ENCODE measurements at regions of chr4 and their contacts with region 1.

Region 1: GRCh38 chr4:173346074-173346473 is 11.9 kb upstream of the HMGB2 start:
- DNase-seq: no peak
- H3K4me3 ChIP-seq: no peak overlapping the region
- H3K27ac ChIP-seq: no peak overlapping the region
- H3K4me1 ChIP-seq: peaks cover 0 to 5% (median 2%) of the 10 kb centered on the region in 4 experiments
- H3K27me3 ChIP-seq: no peaks in the 10 kb centered on the region

Region 2: GRCh38 chr4:173357939-173358338 is 11.9 kb after region 1 on chr4:
- CTCF ChIA-PET with region 1: interaction called, 10 read pairs
- POLR2A ChIA-PET with region 1: no interaction called
- DNase-seq: no peak
- H3K4me3 ChIP-seq: no peak overlapping the region
- H3K27ac ChIP-seq: no peak overlapping the region
- H3K4me1 ChIP-seq: no peaks in the 10 kb centered on the region
- H3K27me3 ChIP-seq: no peaks in the 10 kb centered on the region

Measured in common myeloid progenitor, CD34-positive (primary cell).